ENCODE measurements at regions of chr12 and their contacts with region 1.

Region 1: DNA sequence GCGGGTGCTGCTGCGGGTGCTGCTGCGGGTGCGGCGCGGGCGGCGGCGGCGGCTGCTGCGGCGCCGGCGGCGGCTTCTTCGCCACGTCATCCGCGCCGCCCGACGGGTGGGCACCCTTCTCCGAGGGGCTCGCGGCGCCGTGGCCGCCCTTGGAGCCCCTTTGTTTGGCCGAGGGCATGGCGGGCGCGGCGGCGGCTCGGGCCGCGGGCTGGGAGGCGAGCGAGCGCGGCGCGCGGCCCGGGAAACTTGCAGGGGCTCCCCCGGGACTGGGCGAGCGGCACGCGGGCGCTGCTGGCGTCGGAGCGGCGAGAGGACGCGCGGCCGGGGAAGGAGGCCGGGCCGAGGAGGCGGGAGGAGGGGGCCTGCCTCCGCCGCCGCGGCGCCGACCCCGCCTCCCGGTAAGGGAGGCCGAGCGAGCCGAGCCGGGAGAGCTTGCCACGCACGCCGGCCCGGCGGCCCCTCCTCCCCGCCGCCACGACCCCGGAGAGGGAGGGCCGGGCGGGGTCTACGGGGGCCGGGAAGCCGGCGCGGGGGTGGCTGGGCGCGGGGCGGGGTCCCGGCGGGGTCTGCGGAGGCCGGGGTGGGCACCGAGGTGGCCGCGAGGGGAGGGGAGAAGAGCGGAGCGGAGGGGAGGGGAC is at the start of gene CKAP4:
- DNase-seq: peak in 1 of 2 experiments; percentile 78
- H3K4me3 ChIP-seq: peak within 1 kb of the TSS; percentile 42 to 84 (median 72)
- H3K27ac ChIP-seq: peak within 1 kb of the TSS; percentile 63; the same call in 1 of the 2 replicates
- H3K4me1 ChIP-seq: peaks cover 0 to 10% (median 3%) of the 10 kb centered on the region in 4 experiments; a peak in 4 of 7 replicates
- H3K27me3 ChIP-seq: no peaks in the 10 kb centered on the region
- CTCF ChIP-seq: no peak
- EP300 ChIP-seq: no peak
- POLR2A ChIP-seq: peak in 1 of 2 experiments; percentile 32; a peak in 1 of 3 replicates
- RAD21 ChIP-seq: no peak
- total RNA-seq, gene CKAP4: 79.0 and 80.7 TPM in 2 replicates

Region 2: GRCh38 chr12:106234449-106234848 is 13.3 kb before region 1 on chr12:
- CTCF ChIA-PET with region 1: no interaction called
- POLR2A ChIA-PET with region 1: interaction called, 12 read pairs
- DNase-seq: no peak
- H3K4me3 ChIP-seq: no peak overlapping the region
- H3K27ac ChIP-seq: no peak overlapping the region
- H3K4me1 ChIP-seq: peaks cover 0 to 5% (median under 1%) of the 10 kb centered on the region in 4 experiments; a peak in 1 of 7 replicates
- H3K27me3 ChIP-seq: no peaks in the 10 kb centered on the region
- CTCF ChIP-seq: no peak
- EP300 ChIP-seq: no peak
- POLR2A ChIP-seq: no peak
- RAD21 ChIP-seq: no peak

Measured in H1 (cell line).